Testis (tissue), 5 donors: ENCODE measurements at regions of chr12 and their contacts with region 1.

Region 1: GRCh38 chr12:3299929-3300832 is 190.8 kb upstream of the PRMT8 start:
- DNase-seq: peak; percentile 94
- H3K4me3 ChIP-seq: no peak overlapping the region
- H3K27ac ChIP-seq: no peak overlapping the region
- H3K4me1 ChIP-seq: peaks cover 6% of the 10 kb centered on the region
- H3K27me3 ChIP-seq: no peaks in the 10 kb centered on the region
- CTCF ChIP-seq: peak; percentile 84 to 94 (median 92)
- POLR2A ChIP-seq: no peak

Region 2: DNA sequence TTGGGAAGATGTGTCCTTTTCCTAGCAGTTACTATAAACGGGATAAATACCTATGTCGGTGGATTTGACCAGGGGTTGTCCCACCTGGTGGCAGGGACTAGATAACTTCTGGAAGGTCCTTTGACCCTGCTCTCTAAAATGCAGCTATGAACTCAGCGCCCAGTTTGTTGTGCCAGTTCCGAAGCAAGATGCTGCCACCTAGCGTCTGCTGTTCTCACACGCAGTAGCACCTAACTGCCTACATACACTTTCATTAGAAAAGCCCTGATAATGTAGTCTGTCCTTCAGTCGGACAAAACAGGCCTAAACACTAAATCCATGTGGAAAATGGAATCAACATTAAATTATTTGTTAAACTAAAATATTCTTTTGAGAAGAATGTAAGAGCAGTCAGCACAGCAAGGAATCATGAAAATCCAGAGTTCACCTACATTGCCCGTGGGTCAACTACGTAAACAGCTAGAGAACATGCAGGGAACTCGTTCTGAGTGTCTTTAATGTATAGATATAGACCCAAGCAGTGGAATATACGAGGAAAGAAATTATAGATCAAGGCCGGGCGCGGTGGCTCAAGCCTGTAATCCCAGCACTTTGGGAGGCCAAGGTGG is 503.8 kb after region 1 on chr12:
- intact Hi-C with region 1: loop called (anchors 10 kb)
- DNase-seq: peak; percentile 89
- H3K4me3 ChIP-seq: no peak overlapping the region
- H3K27ac ChIP-seq: no peak overlapping the region
- H3K4me1 ChIP-seq: no peaks in the 10 kb centered on the region
- H3K27me3 ChIP-seq: no peaks in the 10 kb centered on the region
- CTCF ChIP-seq: peak; percentile 49 to 75 (median 66)
- POLR2A ChIP-seq: no peak